AG04449 (cell line): ENCODE measurements at regions of chr12 and their contacts with region 1.

Region 1: GRCh38 chr12:401235-402028 is at the start of gene CCDC77:
- DNase-seq: peak; percentile 40
- H3K4me3 ChIP-seq: peak within 1 kb of the TSS; percentile 68
- CTCF ChIP-seq: peak; percentile 39

Region 2: GRCh38 chr12:414859-415258 is 13.4 kb after region 1 on chr12:
- CTCF ChIA-PET with region 1: interaction called, 13 read pairs
- POLR2A ChIA-PET with region 1: no interaction called
- DNase-seq: no peak
- H3K4me3 ChIP-seq: no peak overlapping the region
- CTCF ChIP-seq: no peak